ENCODE measurements at regions of chr5 and their contacts with region 1.

Region 1: GRCh38 chr5:148353634-148354033 is 18.3 kb downstream of the SPINK9 start:
- DNase-seq: no peak
- ATAC-seq: no peak
- H3K4me3 ChIP-seq: no peak overlapping the region
- H3K27ac ChIP-seq: no peak overlapping the region
- H3K4me1 ChIP-seq: no peaks in the 10 kb centered on the region
- H3K27me3 ChIP-seq: no peaks in the 10 kb centered on the region
- CTCF ChIP-seq: peak in 1 of 3 experiments; percentile 38; a peak in 2 of 6 replicates
- EP300 ChIP-seq: no peak
- POLR2A ChIP-seq: no peak
- RAD21 ChIP-seq: peak; percentile 23 to 69; a peak in 3 of 4 replicates

Region 2: DNA sequence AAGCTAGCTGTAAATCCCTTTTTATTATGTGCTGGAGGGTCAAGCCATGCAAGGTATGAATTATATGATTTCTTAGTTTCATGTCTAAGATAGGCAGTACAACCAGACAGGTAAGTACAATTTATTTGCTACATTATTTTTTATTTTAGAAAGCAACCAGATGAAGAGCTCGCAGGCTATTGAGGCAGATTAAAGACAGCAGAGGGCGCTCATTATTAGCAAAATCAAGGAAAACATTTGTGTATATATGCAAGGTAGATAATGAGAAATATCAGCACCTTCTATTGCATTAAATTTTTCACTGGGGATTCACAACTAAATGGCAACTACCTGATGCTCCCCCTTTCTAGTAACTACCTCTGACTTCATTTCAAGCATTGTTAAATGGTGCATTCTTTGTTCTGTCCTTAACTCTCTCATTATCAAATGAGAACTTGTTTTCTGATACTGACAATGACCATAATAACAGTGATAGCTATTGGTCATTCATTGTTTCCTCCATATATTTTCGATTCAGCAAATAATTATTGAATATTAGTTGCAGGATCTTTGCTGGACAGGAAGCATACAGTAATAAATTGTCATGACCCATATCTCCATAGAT is 466.5 kb before region 1 on chr5:
- CTCF ChIA-PET with region 1: no interaction called
- POLR2A ChIA-PET with region 1: no interaction called
- in situ Hi-C with region 1: no loop called
- intact Hi-C with region 1: loop called (anchors 10 kb)
- DNase-seq: peak in 1 of 4 experiments; percentile 19
- ATAC-seq: 0 out of 3 replicates have a peak, but pooled peaks have one; percentile 39
- H3K4me3 ChIP-seq: no peak overlapping the region
- H3K27ac ChIP-seq: no peak overlapping the region
- H3K4me1 ChIP-seq: no peaks in the 10 kb centered on the region
- H3K27me3 ChIP-seq: no peaks in the 10 kb centered on the region
- CTCF ChIP-seq: peak in 1 of 3 experiments; percentile 51; a peak in 3 of 6 replicates
- EP300 ChIP-seq: no peak
- POLR2A ChIP-seq: no peak
- RAD21 ChIP-seq: peak; percentile 48 to 65; a peak in 3 of 4 replicates

Region 3: DNA sequence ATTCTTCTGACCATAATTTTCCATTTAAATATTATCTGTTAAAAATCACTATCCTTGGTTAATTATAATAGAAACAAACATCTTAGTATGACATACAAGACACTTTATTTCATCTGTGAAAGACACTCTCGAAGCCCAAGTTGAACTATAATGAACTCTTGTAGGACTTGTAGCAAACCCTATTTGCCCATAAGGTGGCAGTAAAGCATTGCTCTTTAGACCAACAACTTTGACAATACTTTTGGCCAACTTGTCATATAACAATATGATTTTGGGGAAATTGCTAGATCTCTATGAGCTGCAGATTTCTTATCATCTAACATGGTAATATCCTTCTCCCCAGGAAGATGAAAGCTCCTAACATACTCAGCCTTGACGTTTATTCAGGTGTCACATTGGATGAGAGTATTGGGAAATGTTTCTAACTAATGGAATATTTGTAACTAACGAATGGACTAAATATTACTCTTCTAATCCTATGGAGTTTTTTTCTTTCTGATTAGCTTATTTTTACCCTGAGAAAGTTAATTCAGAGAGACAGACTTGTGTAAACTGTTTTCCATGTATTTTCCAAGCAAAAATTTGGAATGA is 174.3 kb before region 1 on chr5:
- CTCF ChIA-PET with region 1: no interaction called
- POLR2A ChIA-PET with region 1: no interaction called
- in situ Hi-C with region 1: no loop called
- intact Hi-C with region 1: loop called (anchors 2 kb)
- DNase-seq: peak in 3 of 4 experiments; percentile 6 to 67 (median 6)
- ATAC-seq: peak; percentile 67; the same call in 2 of the 3 replicates
- H3K4me3 ChIP-seq: no peak overlapping the region
- H3K27ac ChIP-seq: no peak overlapping the region
- H3K4me1 ChIP-seq: no peaks in the 10 kb centered on the region
- H3K27me3 ChIP-seq: no peaks in the 10 kb centered on the region
- CTCF ChIP-seq: peak; percentile 48 to 71 (median 61); a peak in 5 of 6 replicates
- EP300 ChIP-seq: no peak
- POLR2A ChIP-seq: no peak
- RAD21 ChIP-seq: peak; percentile 89

Region 4: DNA sequence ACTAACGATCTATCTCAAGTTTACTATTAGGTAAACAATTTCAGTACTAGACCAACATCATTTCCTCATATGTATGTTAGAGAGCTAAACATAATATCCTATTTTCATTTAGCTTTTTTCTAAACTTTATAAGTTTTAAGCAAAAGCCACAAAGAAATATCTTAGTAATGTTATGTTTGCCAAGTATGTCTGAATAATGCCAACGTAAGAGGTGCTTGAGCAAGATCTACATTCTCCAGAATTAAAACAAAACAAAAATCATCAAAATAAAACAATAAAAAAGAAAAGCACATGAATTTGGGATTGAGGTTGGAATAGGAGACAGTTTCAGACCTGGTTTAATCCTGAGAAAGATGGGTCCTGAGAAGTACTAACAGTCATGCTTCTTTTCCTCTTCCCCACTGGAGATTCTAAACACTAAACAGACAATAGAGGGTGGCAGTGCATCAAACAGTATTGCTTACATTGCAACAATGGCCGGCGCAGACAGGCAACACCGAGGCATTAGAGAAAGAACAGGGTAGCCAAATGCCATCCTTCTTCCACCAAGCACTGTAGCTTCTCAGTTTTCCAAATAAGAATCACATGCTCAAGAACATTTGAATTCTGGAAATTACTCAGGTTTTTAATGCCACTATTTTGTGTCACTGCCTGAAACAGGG is 1164.0 kb after region 1 on chr5:
- CTCF ChIA-PET with region 1: no interaction called
- POLR2A ChIA-PET with region 1: no interaction called
- in situ Hi-C with region 1: no loop called
- intact Hi-C with region 1: no loop called
- DNase-seq: no peak
- ATAC-seq: peak; percentile 19; the same call in 1 of the 3 replicates
- H3K4me3 ChIP-seq: no peak overlapping the region
- H3K27ac ChIP-seq: no peak overlapping the region
- H3K4me1 ChIP-seq: peaks cover 0 to 15% of the 10 kb centered on the region in 2 experiments; a peak in 3 of 5 replicates
- H3K27me3 ChIP-seq: no peaks in the 10 kb centered on the region
- CTCF ChIP-seq: no peak
- EP300 ChIP-seq: no peak
- POLR2A ChIP-seq: no peak
- RAD21 ChIP-seq: no peak